Dorsolateral prefrontal cortex (tissue), 120 donors: ENCODE measurements at regions of chr15 and their contacts with region 1.

Region 1: GRCh38 chr15:88897456-88898194 is 2.3 kb upstream of the HAPLN3 start:
- DNase-seq: peak in 7 of 10 donors; percentile 50 to 82 (median 74)
- H3K4me3 ChIP-seq: peak overlapping the region in 8 of 59 donors; percentile 0 to 27 (median 16)
- H3K27ac ChIP-seq: peak overlapping the region in 30 of 59 donors; percentile 9 to 80 (median 60)
- H3K27me3 ChIP-seq: peaks cover 0 to 39% (median 23%) of the 10 kb centered on the region in 45 donors
- CTCF ChIP-seq: peak in 51 of 56 donors; percentile 23 to 70 (median 55)

Region 2: DNA sequence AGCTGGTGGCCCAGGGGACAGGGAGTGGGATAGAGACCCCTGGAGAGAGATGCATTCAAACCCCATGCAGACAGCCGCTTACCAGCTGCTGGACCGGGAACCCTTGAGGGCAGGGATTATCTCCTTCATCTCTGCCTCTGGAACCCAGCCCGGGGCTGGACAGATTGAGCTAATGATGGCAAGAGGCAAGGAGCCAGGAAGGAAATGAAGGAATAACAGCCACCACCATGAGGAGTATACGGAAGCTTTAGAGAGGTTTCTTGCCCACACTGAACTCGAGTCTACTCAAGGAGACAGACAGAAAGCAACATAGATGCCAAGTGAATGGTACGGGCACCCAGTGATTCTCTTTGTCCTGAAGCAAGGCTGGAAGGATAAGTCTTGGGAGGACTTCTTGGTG is 25.5 kb before region 1 on chr15:
- intact Hi-C with region 1: loop called in 1 of 2 experiments (anchors 1 kb)
- DNase-seq: no peak
- H3K4me3 ChIP-seq: no peak overlapping the region
- H3K27ac ChIP-seq: no peak overlapping the region
- H3K27me3 ChIP-seq: peaks cover 0 to 8% (median 0%) of the 10 kb centered on the region in 45 donors
- CTCF ChIP-seq: no peak